MCF 10A (cell line): ENCODE measurements at regions of chr14 and their contacts with region 1.

Region 1: GRCh38 chr14:100239840-100240724 is 1.1 kb downstream of the YY1 start:
- DNase-seq: peak; percentile 82
- H3K4me3 Mint-ChIP-seq: peak overlapping the region; percentile 81
- H3K27ac Mint-ChIP-seq: peak overlapping the region; percentile 87
- H3K4me1 Mint-ChIP-seq: peaks cover 23% of the 10 kb centered on the region
- H3K27me3 Mint-ChIP-seq: no peaks in the 10 kb centered on the region
- CTCF ChIP-seq: peak; percentile 60

Region 2: DNA sequence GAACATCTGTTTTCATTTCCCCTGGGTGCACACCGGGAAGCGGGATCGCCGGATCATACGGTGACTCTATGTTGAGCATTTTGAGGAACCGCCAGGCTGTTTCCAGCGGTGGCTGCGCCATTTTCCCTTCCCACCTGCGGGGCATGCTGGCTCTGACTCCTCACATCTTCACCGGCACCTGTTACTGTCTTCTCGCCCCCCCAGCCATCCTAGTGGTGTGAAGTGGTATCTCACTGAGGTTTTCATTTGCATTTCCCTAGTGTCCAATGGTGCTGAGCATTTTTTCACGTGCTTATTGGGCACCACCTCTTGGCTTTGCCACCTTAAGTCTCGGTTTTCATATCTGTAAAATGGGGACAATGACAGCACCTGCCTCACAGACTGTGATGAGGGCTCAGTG is 490.9 kb before region 1 on chr14:
- CTCF ChIA-PET with region 1: no interaction called
- POLR2A ChIA-PET with region 1: no interaction called
- intact Hi-C with region 1: no loop called
- DNase-seq: no peak
- H3K4me3 Mint-ChIP-seq: no peak overlapping the region
- H3K27ac Mint-ChIP-seq: no peak overlapping the region
- H3K4me1 Mint-ChIP-seq: peaks cover 28% of the 10 kb centered on the region
- H3K27me3 Mint-ChIP-seq: no peaks in the 10 kb centered on the region
- CTCF ChIP-seq: peak; percentile 21

Region 3: GRCh38 chr14:100203949-100204834 is 35.9 kb before region 1 on chr14:
- CTCF ChIA-PET with region 1: interaction called, 4 read pairs
- POLR2A ChIA-PET with region 1: interaction called, 38 read pairs
- intact Hi-C with region 1: no loop called
- DNase-seq: peak; percentile 87
- H3K4me3 Mint-ChIP-seq: no peak overlapping the region
- H3K27ac Mint-ChIP-seq: peak overlapping the region; percentile 70
- H3K4me1 Mint-ChIP-seq: no peaks in the 10 kb centered on the region
- H3K27me3 Mint-ChIP-seq: no peaks in the 10 kb centered on the region
- CTCF ChIP-seq: no peak

Region 4: DNA sequence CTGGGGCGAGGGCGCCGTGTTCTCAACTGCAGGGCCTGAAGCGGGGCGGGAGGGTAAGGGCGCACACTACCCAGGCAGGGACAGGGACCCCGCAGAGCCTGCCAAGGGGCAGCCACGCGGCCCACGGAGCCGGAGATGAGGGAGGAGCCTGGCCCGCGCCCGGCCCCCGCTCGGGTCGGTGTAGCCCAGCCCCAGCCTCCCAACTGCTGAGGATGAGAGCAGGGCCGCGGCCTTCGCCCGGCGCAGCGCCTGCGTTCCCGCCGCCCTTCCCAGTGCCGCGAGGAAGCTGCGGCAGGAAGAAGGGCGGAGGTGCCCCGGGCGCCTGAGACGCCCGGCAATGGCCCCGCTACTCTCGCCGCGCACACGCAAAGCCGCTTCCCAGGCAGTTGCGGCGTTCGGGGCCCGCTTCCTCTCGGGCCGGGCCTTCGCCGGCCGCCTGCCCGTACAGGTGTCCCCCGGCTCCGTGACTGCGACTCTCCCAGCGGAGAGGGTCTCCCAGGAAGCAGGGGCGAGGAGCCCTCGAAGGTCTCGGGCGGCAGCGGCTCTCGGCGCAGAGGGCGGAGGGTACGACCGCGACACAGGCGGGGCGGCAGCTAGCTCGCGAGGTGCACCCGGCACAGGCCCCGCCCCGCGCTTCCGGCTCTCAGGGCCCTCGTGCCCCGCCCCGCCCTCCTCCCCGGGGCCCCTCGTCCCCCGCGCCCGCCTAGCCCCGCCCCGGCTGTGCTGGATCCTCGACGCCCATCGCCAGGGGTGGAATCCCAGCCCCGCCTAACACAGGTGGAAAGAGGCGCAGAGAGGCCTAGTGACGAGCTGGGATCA is 25.9 kb before region 1 on chr14:
- CTCF ChIA-PET with region 1: interaction called, 3 read pairs
- POLR2A ChIA-PET with region 1: interaction called, 45 read pairs
- intact Hi-C with region 1: no loop called
- DNase-seq: peak; percentile 92
- H3K4me3 Mint-ChIP-seq: peak overlapping the region; percentile 61
- H3K27ac Mint-ChIP-seq: peak overlapping the region; percentile 88
- H3K4me1 Mint-ChIP-seq: peaks cover 11% of the 10 kb centered on the region
- H3K27me3 Mint-ChIP-seq: no peaks in the 10 kb centered on the region
- CTCF ChIP-seq: no peak

Region 5: DNA sequence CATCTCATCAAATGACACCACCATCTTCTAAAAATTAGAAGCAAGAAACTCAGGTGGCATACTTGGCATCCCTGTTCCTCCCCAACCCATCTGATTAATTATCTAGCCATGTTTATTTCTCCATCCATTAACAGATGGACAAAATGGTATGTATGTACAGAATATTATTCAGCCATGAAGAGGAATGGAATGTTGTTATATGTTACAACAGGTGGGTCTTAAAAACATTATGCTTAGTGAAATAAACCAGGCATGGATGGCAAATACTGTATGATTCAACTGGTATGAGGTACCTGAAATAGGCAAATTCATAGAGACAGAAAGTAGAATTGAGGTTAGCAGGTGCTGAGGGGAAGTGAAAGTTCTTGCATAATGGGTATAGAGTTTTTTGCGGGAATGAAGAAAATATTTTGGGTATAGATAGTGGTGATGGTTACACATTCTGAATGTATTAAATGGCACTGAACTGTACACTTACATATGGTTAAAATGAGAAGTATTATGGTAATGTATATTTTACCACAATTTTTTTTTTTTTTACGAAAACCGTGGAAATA is 16.3 kb after region 1 on chr14:
- CTCF ChIA-PET with region 1: interaction called, 11 read pairs
- POLR2A ChIA-PET with region 1: interaction called, 3 read pairs
- intact Hi-C with region 1: no loop called
- DNase-seq: no peak
- H3K4me3 Mint-ChIP-seq: no peak overlapping the region
- H3K27ac Mint-ChIP-seq: no peak overlapping the region
- H3K4me1 Mint-ChIP-seq: peaks cover 26% of the 10 kb centered on the region
- H3K27me3 Mint-ChIP-seq: no peaks in the 10 kb centered on the region
- CTCF ChIP-seq: no peak

Region 6: GRCh38 chr14:100375963-100376735 is 136.1 kb after region 1 on chr14:
- CTCF ChIA-PET with region 1: interaction called, 5 read pairs
- POLR2A ChIA-PET with region 1: interaction called, 10 read pairs
- intact Hi-C with region 1: loop called (anchors 2 kb)
- DNase-seq: peak; percentile 94
- H3K4me3 Mint-ChIP-seq: peak within 1 kb of the TSS; percentile 72
- H3K27ac Mint-ChIP-seq: peak within 1 kb of the TSS; percentile 95
- H3K4me1 Mint-ChIP-seq: peaks cover 44% of the 10 kb centered on the region
- H3K27me3 Mint-ChIP-seq: no peaks in the 10 kb centered on the region
- CTCF ChIP-seq: no peak